MCF 10A (cell line): ENCODE measurements at regions of chr12 and their contacts with region 1.

Region 1: DNA sequence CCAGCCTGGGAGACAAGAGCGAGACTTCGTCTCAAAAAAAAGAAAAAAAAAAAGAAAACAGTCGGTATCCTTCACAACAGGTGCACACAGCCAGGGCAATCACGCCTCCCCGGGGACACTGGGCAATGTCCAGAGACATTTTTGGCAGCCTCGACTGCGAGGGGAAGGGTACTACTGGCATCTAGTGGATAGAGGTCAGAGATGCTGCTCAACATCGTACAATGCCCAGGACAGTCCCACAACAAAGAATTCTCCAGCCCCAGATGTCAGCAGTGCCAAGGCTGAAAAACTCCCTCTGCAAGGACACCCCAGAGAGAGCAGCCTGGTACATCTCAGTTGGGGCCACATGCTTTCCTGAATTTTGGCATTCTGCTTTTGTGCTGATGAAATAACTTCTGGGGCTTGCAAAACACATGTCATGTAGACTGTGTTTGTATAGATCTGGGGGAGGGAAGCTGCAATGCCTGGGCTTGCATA is 21.5 kb downstream of the ALDH2 start:
- DNase-seq: peak; percentile 79
- H3K4me3 Mint-ChIP-seq: no peak overlapping the region
- H3K27ac Mint-ChIP-seq: no peak overlapping the region
- H3K4me1 Mint-ChIP-seq: peaks cover 12% of the 10 kb centered on the region
- H3K27me3 Mint-ChIP-seq: no peaks in the 10 kb centered on the region
- CTCF ChIP-seq: peak; percentile 58

Region 2: DNA sequence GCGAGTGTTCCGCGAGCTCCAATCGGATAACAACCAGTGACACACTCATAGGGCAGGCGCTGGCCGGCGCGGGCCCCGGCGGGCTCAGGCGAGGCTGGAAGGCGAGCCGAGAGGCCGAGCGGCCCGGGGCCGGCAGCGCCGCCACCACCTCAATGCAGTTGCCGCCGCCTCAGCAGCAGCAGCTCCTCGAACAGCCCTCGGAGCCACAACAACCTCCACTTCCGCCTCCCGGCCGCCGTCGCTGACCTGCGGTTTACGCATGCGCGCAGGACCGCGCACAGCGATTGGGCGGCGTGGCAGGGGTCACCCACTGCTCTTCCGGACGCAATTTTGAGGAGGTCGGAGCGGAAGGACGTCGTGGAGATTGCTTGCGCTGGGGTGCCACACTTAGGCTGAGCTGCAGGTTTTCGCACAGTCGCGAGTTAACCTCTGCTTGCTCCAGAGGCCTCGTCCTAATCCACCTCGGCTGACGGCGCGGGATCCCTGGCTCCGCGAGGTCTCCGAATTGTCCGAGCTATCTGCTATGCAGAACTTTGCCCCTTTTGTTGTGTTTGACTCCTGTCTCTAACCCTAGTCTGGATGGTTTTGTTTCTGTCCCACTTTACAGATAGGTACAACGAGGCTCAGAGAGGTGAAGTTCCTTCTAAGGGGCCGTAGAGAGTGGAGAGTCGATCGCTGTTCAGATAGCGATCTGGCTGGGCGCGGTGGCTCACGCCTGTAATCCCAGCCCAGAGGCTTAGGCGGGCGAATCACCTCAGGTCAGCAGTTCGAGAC is 102.3 kb before region 1 on chr12 and contains the starts of genes ACAD10 and BRAP:
- CTCF ChIA-PET with region 1: interaction called, 4 read pairs
- POLR2A ChIA-PET with region 1: interaction called, 3 read pairs
- intact Hi-C with region 1: loop called (anchors 1 kb)
- DNase-seq: peak; percentile 93
- H3K4me3 Mint-ChIP-seq: peak within 1 kb of the TSS; percentile 93
- H3K27ac Mint-ChIP-seq: peak within 1 kb of the TSS; percentile 93
- H3K4me1 Mint-ChIP-seq: peaks cover 17% of the 10 kb centered on the region
- H3K27me3 Mint-ChIP-seq: no peaks in the 10 kb centered on the region
- CTCF ChIP-seq: no peak
- total RNA-seq, gene ACAD10: 25.4 and 31.0 TPM in 2 replicates
- total RNA-seq, gene BRAP: 22.1 and 24.4 TPM in 2 replicates

Region 3: GRCh38 chr12:111753144-111753881 is 34.9 kb before region 1 on chr12:
- CTCF ChIA-PET with region 1: interaction called, 44 read pairs
- POLR2A ChIA-PET with region 1: interaction called, 3 read pairs
- intact Hi-C with region 1: loop called (anchors 1 kb)
- DNase-seq: peak; percentile 55
- H3K4me3 Mint-ChIP-seq: no peak overlapping the region
- H3K27ac Mint-ChIP-seq: no peak overlapping the region
- H3K4me1 Mint-ChIP-seq: no peaks in the 10 kb centered on the region
- H3K27me3 Mint-ChIP-seq: no peaks in the 10 kb centered on the region
- CTCF ChIP-seq: peak; percentile 64

Region 4: GRCh38 chr12:111775205-111776193 is 12.7 kb before region 1 on chr12:
- CTCF ChIA-PET with region 1: interaction called, 5 read pairs
- POLR2A ChIA-PET with region 1: interaction called, 14 read pairs
- intact Hi-C with region 1: no loop called
- DNase-seq: peak; percentile 89
- H3K4me3 Mint-ChIP-seq: peak overlapping the region; percentile 63
- H3K27ac Mint-ChIP-seq: peak overlapping the region; percentile 93
- H3K4me1 Mint-ChIP-seq: peaks cover 24% of the 10 kb centered on the region
- H3K27me3 Mint-ChIP-seq: no peaks in the 10 kb centered on the region
- CTCF ChIP-seq: no peak

Region 5: DNA sequence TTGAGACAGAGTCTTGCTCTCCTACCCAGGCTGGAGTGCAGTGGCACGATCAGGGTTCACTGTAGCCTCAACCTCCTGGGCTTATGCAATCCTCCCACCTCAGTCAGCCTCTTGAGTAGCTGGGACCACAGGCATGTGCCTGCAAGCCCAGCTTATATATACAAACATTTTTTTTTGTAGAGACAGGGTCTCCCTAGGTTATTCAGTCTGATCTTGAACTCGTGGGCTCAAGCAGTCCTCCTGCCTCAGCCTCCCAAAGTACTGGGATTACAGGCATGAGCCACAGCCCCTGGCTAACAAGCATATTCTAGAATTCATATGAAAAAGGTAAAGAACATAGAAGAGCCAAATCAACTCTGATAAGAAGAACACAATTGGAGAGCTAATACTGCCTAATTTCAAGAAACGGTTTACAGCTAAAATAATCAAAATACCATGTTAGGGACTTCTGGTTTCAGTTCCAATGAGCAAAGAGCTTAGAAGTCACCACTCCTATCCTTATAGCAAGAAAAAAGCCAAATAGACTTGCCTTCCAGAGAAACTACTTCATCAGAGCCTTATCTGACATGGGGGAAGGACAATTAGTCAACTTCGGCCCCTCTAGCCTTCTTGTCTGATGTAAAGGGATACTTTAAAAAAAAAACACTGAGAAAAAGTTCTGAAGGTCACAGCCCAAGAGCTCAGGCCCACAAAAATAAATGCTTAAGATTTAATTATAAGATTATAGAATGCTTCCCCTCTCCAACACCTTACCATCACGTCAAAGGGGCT is 187.1 kb after region 1 on chr12:
- CTCF ChIA-PET with region 1: no interaction called
- POLR2A ChIA-PET with region 1: no interaction called
- intact Hi-C with region 1: no loop called
- DNase-seq: peak; percentile 34
- H3K4me3 Mint-ChIP-seq: no peak overlapping the region
- H3K27ac Mint-ChIP-seq: no peak overlapping the region
- H3K4me1 Mint-ChIP-seq: peaks cover 5% of the 10 kb centered on the region
- H3K27me3 Mint-ChIP-seq: no peaks in the 10 kb centered on the region
- CTCF ChIP-seq: no peak

Region 6: DNA sequence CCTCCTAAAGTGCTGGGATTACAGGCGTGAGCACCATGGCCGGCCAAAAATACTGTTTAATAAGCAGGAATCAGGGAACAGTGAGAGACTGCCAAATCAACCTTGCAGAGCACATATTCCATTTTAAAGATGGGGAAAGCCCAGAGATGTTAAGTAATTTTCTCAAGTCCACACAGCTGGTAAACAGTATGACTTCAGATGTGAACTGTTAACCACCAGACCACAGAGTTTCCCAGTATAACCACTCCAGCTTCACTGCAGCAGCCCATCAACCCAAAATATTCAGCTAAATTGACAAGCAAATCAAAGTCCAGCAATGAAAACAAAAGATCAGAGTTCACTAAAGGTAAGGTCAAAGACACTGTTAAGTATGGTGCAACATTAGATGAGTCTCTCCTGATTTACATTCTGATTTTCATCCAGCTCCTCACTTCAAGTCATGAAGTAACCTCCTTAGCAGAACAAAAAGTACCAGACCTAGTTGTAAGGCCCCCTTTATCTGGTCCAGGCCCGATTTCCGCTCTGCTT is 419.2 kb after region 1 on chr12:
- CTCF ChIA-PET with region 1: no interaction called
- POLR2A ChIA-PET with region 1: no interaction called
- intact Hi-C with region 1: no loop called
- DNase-seq: no peak
- H3K4me3 Mint-ChIP-seq: no peak overlapping the region
- H3K27ac Mint-ChIP-seq: no peak overlapping the region
- H3K4me1 Mint-ChIP-seq: no peaks in the 10 kb centered on the region
- H3K27me3 Mint-ChIP-seq: no peaks in the 10 kb centered on the region
- CTCF ChIP-seq: no peak